CD4-positive, alpha-beta T cell (primary cell): ENCODE measurements at regions of chr7 and their contacts with region 1.

Region 1: DNA sequence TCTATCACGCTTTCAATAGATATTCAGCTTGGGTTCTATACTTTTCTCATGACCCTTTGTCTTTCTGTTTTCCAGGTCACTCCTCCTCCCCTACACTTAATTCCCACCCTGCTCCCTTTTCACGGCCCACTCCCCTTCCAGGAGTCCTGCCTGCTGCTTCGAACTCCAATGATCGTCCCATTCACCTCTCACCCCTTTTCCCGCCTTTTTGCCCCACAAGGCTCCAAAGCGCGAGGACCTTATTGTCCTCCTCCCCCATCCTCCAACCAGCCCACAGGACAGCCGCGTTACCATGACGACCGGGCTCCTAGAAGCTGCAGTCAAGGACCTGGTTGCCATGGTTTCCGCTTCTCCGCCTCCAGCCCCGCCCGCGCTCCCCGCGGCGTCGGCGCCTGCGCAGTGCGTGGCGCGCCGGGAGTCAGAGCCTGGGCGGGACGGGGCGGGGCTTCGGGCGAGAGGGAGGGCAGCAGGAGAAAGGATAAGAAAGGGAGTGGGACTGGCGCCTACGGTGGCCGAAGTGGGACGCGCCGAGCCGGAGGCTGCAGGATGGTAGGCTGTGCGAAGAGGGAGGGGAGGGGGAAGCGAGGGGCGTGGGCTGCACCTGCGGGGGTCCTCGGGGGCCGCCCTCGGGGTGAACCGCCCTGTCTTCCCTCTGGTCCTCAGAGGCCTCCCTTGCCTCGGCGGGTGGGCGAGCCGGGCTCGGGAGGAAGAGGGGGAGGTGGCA is at the start of gene AP1S1:
- DNase-seq: peak; percentile 83 to 98 (median 89)
- ATAC-seq: peak; percentile 88
- H3K4me3 ChIP-seq: peak within 1 kb of the TSS; percentile 69
- H3K4me3 Mint-ChIP-seq: peak within 1 kb of the TSS; percentile 89
- H3K27ac ChIP-seq: no peak within 1 kb of the TSS
- H3K27ac Mint-ChIP-seq: peak within 1 kb of the TSS; percentile 72
- H3K4me1 ChIP-seq: peaks cover 19% of the 10 kb centered on the region
- H3K4me1 Mint-ChIP-seq: peaks cover 15% of the 10 kb centered on the region
- H3K27me3 ChIP-seq: no peaks in the 10 kb centered on the region
- H3K27me3 Mint-ChIP-seq: peaks cover 15% of the 10 kb centered on the region
- CTCF ChIP-seq: no peak
- total RNA-seq, gene AP1S1: 3.0 to 3.9 TPM

Region 2: DNA sequence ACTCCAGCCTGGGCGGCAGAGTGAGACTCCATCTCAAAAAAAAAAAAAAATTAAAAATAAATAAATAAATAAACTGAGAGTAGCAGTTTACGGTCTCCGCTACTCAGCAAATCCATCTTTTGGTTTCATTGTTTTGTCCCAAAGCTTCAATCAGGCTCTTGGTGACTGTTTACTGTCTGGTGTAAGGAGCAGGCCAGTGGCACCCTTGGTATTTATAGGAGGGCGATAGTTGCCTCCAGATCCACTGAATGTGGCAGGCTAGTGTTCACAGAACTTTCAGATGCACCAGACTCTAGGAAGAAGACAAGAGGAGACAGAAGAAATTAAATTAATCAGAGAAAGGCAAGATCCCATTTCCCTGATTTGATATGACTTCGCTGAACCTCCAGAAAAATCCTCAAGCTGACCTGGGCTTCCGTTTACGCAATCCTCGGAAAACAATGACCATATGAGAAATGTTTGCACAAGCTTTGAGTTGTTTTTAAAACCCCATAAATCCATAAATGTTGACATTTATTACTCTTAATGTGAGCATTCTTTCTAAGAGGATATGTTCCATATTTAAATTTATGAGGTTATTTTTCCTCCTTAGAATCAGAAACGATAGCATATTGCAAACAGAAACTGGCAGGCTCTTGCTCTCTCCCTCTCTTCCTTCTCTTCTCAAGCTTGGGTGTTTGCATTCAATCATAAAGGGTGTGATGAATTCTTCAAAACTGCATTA is 211.9 kb before region 1 on chr7:
- CTCF ChIA-PET with region 1: no interaction called
- POLR2A ChIA-PET with region 1: no interaction called
- intact Hi-C with region 1: no loop called
- DNase-seq: no peak
- ATAC-seq: no peak
- H3K4me3 ChIP-seq: no peak overlapping the region
- H3K4me3 Mint-ChIP-seq: no peak overlapping the region
- H3K27ac ChIP-seq: no peak overlapping the region
- H3K27ac Mint-ChIP-seq: no peak overlapping the region
- H3K4me1 ChIP-seq: no peaks in the 10 kb centered on the region
- H3K4me1 Mint-ChIP-seq: no peaks in the 10 kb centered on the region
- H3K27me3 ChIP-seq: peaks cover 0 to 2% of the 10 kb centered on the region in 2 experiments
- H3K27me3 Mint-ChIP-seq: peaks cover 33% of the 10 kb centered on the region
- CTCF ChIP-seq: no peak

Region 3: DNA sequence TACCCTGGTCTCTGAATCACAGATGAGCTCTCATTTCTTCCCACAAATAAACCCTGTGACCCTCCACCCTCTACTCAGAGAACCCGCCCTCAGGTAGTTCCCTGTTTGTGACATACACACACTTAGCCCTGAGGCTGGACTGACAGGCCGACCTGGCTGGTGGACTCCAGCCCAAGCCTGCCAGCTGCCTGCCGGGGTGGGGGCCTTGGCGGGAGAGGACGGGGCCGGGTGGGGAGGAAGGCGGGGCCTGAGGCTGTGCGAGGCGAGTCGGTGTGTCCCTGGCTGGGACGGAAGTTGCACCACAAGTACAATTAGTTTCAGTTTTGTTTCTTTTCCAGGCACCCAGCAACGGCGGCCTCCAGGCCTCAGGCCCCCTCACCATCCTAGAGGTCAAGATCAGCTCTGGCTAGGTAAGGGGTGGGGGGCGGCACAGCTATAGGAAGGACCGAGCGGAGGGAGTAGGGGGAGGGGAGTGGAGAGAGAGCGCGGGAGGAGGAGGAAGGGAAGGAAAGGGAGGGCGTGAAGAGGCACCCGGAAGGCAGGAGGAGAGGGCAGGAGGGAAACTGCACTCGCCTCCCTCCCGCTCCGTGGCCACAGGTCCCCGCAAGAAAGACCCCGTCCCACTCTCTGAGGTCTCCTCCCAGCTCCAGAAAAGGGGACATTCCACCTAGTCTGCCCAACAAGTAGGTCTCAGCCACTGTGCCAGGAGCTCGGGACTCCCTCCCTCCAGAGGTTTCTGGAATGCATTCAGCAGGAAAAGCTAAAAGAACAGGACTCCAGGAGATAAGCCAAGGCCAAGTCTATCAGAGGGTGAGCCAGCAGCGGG is 68.8 kb before region 1 on chr7 and contains the start of gene TRIM56:
- CTCF ChIA-PET with region 1: no interaction called
- POLR2A ChIA-PET with region 1: no interaction called
- intact Hi-C with region 1: no loop called
- DNase-seq: peak; percentile 52 to 88 (median 70)
- ATAC-seq: peak; percentile 90
- H3K4me3 ChIP-seq: peak within 1 kb of the TSS; percentile 99
- H3K4me3 Mint-ChIP-seq: peak within 1 kb of the TSS; percentile 100
- H3K27ac ChIP-seq: peak within 1 kb of the TSS; percentile 91 to 92
- H3K27ac Mint-ChIP-seq: peak within 1 kb of the TSS; percentile 96
- H3K4me1 ChIP-seq: peaks cover 53% of the 10 kb centered on the region
- H3K4me1 Mint-ChIP-seq: peaks cover 28% of the 10 kb centered on the region
- H3K27me3 ChIP-seq: no peaks in the 10 kb centered on the region
- H3K27me3 Mint-ChIP-seq: no peaks in the 10 kb centered on the region
- CTCF ChIP-seq: no peak
- total RNA-seq, gene TRIM56: 29.9 to 31.8 TPM

Region 4: DNA sequence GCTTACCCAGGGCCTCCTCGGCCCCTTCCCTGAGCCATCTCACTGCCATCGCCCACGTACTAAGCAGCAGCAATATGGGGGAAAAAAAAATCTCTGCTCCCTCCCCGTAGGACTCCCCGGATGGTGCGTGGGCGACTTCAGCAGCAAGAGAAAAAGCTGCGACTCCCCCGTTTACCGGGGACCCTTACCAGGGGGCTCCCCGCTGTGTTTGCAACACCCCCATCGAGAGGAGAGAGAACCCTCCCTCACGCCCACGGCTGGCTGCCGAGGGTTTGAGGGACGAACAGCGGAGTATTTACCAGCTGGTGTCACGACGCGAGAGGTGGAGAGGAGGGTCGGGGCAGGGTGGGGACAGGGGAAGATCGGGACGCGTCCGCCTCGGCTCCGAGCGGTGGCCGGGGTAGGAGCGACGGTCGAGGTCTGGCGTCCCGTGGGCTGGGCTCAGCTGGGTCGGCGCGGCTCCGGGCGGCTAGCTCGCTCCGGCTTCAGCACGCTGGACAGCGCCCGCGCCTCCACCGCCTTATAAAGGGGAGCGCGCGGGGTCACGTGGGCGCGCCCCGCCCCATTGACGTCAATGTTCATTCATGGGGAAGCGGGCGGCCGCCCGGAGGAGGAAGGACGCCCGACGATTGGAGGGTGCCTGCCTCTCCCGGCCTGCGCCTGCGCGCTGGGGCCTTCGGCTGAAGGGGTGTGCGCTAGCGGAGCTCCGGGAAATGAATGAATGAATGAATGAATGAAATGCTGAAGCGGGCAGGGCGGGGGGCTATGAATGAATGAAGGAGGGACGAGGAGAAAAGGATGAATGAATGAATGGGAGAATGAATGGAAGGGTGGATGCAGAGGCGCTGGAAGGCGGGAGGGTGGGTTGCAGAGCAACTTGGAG is 11.2 kb after region 1 on chr7 and contains the start of gene VGF:
- CTCF ChIA-PET with region 1: no interaction called
- POLR2A ChIA-PET with region 1: interaction called, 6 read pairs
- intact Hi-C with region 1: loop called in 1 of 2 experiments (anchors 2 kb)
- DNase-seq: peak; percentile 85 to 97 (median 92)
- ATAC-seq: peak; percentile 85
- H3K4me3 ChIP-seq: peak within 1 kb of the TSS; percentile 19
- H3K4me3 Mint-ChIP-seq: peak within 1 kb of the TSS; percentile 74
- H3K27ac ChIP-seq: no peak within 1 kb of the TSS
- H3K27ac Mint-ChIP-seq: peak within 1 kb of the TSS; percentile 14
- H3K4me1 ChIP-seq: peaks cover 58% of the 10 kb centered on the region
- H3K4me1 Mint-ChIP-seq: peaks cover 43% of the 10 kb centered on the region
- H3K27me3 ChIP-seq: peaks cover 78 to 83% of the 10 kb centered on the region in 2 experiments
- H3K27me3 Mint-ChIP-seq: peaks cover 80% of the 10 kb centered on the region
- CTCF ChIP-seq: no peak
- total RNA-seq, gene VGF: not detected